GM12878 (cell line): ENCODE measurements at regions of chr6 and their contacts with region 1.

Region 1: GRCh38 chr6:97497713-97498331 is 214.8 kb upstream of the MMS22L start:
- DNase-seq: peak; percentile 12
- ATAC-seq: peak; percentile 100
- H3K4me3 ChIP-seq: no peak overlapping the region
- H3K27ac ChIP-seq: no peak overlapping the region
- H3K4me1 ChIP-seq: no peaks in the 10 kb centered on the region
- H3K27me3 ChIP-seq: no peaks in the 10 kb centered on the region
- CTCF ChIP-seq: peak; percentile 80 to 85 (median 84)
- EP300 ChIP-seq: no peak
- POLR2A ChIP-seq: no peak
- RAD21 ChIP-seq: peak; percentile 78

Region 2: GRCh38 chr6:97322811-97323210 is 175.0 kb before region 1 on chr6:
- CTCF ChIA-PET with region 1: no interaction called
- POLR2A ChIA-PET with region 1: no interaction called
- RAD21 ChIA-PET with region 1: no interaction called
- SMC1A ChIA-PET with region 1: no interaction called
- in situ Hi-C with region 1: no loop called
- intact Hi-C with region 1: no loop called
- DNase-seq: no peak
- ATAC-seq: no peak
- H3K4me3 ChIP-seq: no peak overlapping the region
- H3K27ac ChIP-seq: no peak overlapping the region
- H3K4me1 ChIP-seq: no peaks in the 10 kb centered on the region
- H3K27me3 ChIP-seq: no peaks in the 10 kb centered on the region
- CTCF ChIP-seq: no peak
- EP300 ChIP-seq: no peak
- POLR2A ChIP-seq: no peak
- RAD21 ChIP-seq: no peak

Region 3: DNA sequence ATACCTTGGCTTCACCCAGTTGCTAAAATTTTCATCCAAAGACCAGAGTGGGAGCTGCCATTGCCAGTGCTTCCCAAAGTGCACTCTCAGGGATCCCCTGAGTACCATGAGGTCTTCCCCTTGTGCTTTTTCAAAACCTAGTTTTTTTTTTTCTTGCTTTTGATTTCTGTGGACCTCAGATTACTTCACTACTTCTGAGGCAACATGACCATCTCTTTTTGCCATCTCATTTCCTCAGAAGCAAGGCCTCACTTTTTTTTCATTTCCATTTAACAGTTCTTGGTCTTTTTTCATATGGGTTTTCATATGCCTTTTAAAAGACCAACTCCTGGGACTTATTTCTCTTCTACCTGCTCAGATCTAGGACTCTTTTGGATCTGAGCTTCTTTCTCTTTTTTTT is 150.7 kb before region 1 on chr6:
- CTCF ChIA-PET with region 1: no interaction called
- POLR2A ChIA-PET with region 1: no interaction called
- RAD21 ChIA-PET with region 1: no interaction called
- SMC1A ChIA-PET with region 1: no interaction called
- in situ Hi-C with region 1: no loop called
- intact Hi-C with region 1: no loop called
- DNase-seq: no peak
- ATAC-seq: no peak
- H3K4me3 ChIP-seq: no peak overlapping the region
- H3K27ac ChIP-seq: no peak overlapping the region
- H3K4me1 ChIP-seq: no peaks in the 10 kb centered on the region
- H3K27me3 ChIP-seq: no peaks in the 10 kb centered on the region
- CTCF ChIP-seq: no peak
- EP300 ChIP-seq: no peak
- POLR2A ChIP-seq: no peak
- RAD21 ChIP-seq: no peak

Region 4: GRCh38 chr6:97726378-97726777 is 228.6 kb after region 1 on chr6:
- CTCF ChIA-PET with region 1: no interaction called
- POLR2A ChIA-PET with region 1: no interaction called
- RAD21 ChIA-PET with region 1: no interaction called
- SMC1A ChIA-PET with region 1: no interaction called
- in situ Hi-C with region 1: no loop called
- intact Hi-C with region 1: no loop called
- DNase-seq: no peak
- ATAC-seq: no peak
- H3K4me3 ChIP-seq: no peak overlapping the region
- H3K27ac ChIP-seq: no peak overlapping the region
- H3K4me1 ChIP-seq: no peaks in the 10 kb centered on the region
- H3K27me3 ChIP-seq: no peaks in the 10 kb centered on the region
- CTCF ChIP-seq: peak in 1 of 3 experiments; percentile 7; a peak in 1 of 6 replicates
- EP300 ChIP-seq: no peak
- POLR2A ChIP-seq: no peak
- RAD21 ChIP-seq: no peak

Region 5: DNA sequence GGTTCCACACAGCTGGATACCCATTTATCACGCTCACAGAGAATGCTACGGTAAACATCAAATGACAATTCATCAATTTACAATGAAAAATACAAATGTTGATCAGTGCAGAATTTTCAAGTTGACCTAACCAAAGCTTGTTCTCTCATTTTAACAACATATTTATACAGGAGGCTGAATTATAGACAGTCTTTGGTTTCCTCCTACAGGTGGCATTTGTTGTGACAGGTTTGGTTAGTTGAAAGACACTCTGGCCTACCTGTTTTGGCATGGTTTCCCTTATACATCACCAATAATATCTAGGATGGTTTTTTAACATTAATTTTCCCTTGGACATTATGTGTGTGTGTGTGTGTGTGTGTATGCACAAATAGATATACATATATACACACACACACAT is 427.7 kb after region 1 on chr6:
- CTCF ChIA-PET with region 1: interaction called, 4 read pairs
- POLR2A ChIA-PET with region 1: no interaction called
- RAD21 ChIA-PET with region 1: no interaction called
- SMC1A ChIA-PET with region 1: interaction called, 4 read pairs
- in situ Hi-C with region 1: no loop called
- intact Hi-C with region 1: loop called (anchors 2 kb)
- DNase-seq: no peak
- ATAC-seq: no peak
- H3K4me3 ChIP-seq: no peak overlapping the region
- H3K27ac ChIP-seq: no peak overlapping the region
- H3K4me1 ChIP-seq: no peaks in the 10 kb centered on the region
- H3K27me3 ChIP-seq: no peaks in the 10 kb centered on the region
- CTCF ChIP-seq: peak in 1 of 3 experiments; percentile 38; a peak in 3 of 6 replicates
- EP300 ChIP-seq: no peak
- POLR2A ChIP-seq: no peak
- RAD21 ChIP-seq: peak; percentile 49; the same call in 1 of the 2 replicates

Region 6: DNA sequence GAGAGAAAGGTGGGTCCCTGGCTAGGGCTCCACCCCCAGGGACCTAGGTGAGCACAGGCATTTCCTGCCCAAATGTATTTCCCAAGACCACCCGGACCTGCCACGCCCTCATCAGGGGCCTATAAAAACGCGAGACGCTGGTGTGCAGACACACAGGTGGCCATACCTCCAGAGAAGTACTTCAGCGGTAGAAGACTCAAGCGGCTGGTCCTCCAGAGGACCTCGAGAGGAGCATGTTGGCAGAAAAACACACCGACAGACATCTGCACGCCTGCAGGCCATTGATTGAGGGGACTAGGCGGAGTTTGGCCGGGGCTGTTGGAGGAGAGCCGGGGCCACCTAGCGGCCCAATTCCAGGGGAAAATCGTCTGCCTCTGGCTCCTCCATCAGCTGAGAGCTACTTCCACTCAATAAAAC is 481.0 kb after region 1 on chr6:
- CTCF ChIA-PET with region 1: no interaction called
- POLR2A ChIA-PET with region 1: no interaction called
- RAD21 ChIA-PET with region 1: no interaction called
- SMC1A ChIA-PET with region 1: no interaction called
- in situ Hi-C with region 1: no loop called
- intact Hi-C with region 1: loop called (anchors 5 kb)
- DNase-seq: no peak
- ATAC-seq: peak; percentile 69
- H3K4me3 ChIP-seq: no peak overlapping the region
- H3K27ac ChIP-seq: no peak overlapping the region
- H3K4me1 ChIP-seq: no peaks in the 10 kb centered on the region
- H3K27me3 ChIP-seq: no peaks in the 10 kb centered on the region
- CTCF ChIP-seq: peak in 2 of 3 experiments; percentile 12 to 19; a peak in 1 of 6 replicates
- EP300 ChIP-seq: no peak
- POLR2A ChIP-seq: no peak
- RAD21 ChIP-seq: no peak